OCI-LY7 (cell line): ENCODE measurements at regions of chr12 and their contacts with region 1.

Region 1: GRCh38 chr12:7995266-7995963 is 37.1 kb upstream of the FOXJ2 start:
- DNase-seq: peak; percentile 88
- H3K4me3 ChIP-seq: no peak overlapping the region
- H3K27ac ChIP-seq: no peak overlapping the region
- H3K4me1 ChIP-seq: peaks cover 14% of the 10 kb centered on the region
- CTCF ChIP-seq: peak; percentile 93

Region 2: GRCh38 chr12:7859552-7859951 is 135.9 kb before region 1 on chr12:
- CTCF ChIA-PET with region 1: no interaction called
- POLR2A ChIA-PET with region 1: no interaction called
- intact Hi-C with region 1: loop called (anchors 2 kb)
- DNase-seq: no peak
- H3K4me3 ChIP-seq: no peak overlapping the region
- H3K27ac ChIP-seq: no peak overlapping the region
- H3K4me1 ChIP-seq: no peaks in the 10 kb centered on the region
- CTCF ChIP-seq: no peak

Region 3: DNA sequence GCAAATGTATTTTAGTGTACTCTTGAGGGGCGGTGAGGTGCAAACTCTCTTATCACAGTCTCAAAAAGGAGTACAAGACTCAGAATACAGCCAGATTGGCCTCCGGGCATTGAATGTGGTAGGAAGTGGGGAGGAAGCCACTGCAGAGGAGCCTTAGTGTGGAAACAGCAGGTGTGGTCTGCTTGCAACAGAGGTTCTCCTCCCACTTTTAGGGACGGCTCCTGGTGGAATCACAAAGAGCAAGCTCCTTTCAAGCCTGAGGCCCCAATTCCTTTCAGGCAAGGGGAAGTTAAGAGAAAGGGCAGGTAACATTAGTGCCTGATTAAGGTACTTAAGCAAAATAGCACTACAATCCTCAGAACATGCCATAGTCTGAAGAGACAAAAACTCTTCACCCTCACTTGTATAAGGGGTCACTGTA is 35.7 kb before region 1 on chr12:
- CTCF ChIA-PET with region 1: no interaction called
- POLR2A ChIA-PET with region 1: interaction called, 3 read pairs
- intact Hi-C with region 1: loop called (anchors 1 kb)
- DNase-seq: peak; percentile 57
- H3K4me3 ChIP-seq: peak overlapping the region; percentile 71
- H3K27ac ChIP-seq: peak overlapping the region; percentile 26
- H3K4me1 ChIP-seq: peaks cover 31% of the 10 kb centered on the region
- CTCF ChIP-seq: no peak

Region 4: GRCh38 chr12:8026291-8026900 is 31.0 kb after region 1 on chr12:
- CTCF ChIA-PET with region 1: no interaction called
- POLR2A ChIA-PET with region 1: no interaction called
- intact Hi-C with region 1: no loop called
- DNase-seq: peak; percentile 98
- H3K4me3 ChIP-seq: peak overlapping the region; percentile 71
- H3K27ac ChIP-seq: peak overlapping the region; percentile 84
- H3K4me1 ChIP-seq: peaks cover 5% of the 10 kb centered on the region
- CTCF ChIP-seq: no peak

Region 5: GRCh38 chr12:9073076-9073475 is 1077.7 kb after region 1 on chr12:
- CTCF ChIA-PET with region 1: no interaction called
- POLR2A ChIA-PET with region 1: no interaction called
- intact Hi-C with region 1: no loop called
- DNase-seq: no peak
- H3K4me3 ChIP-seq: no peak overlapping the region
- H3K27ac ChIP-seq: no peak overlapping the region
- H3K4me1 ChIP-seq: no peaks in the 10 kb centered on the region
- CTCF ChIP-seq: no peak